ENCODE measurements at regions of chr4 and their contacts with region 1.

Region 1: DNA sequence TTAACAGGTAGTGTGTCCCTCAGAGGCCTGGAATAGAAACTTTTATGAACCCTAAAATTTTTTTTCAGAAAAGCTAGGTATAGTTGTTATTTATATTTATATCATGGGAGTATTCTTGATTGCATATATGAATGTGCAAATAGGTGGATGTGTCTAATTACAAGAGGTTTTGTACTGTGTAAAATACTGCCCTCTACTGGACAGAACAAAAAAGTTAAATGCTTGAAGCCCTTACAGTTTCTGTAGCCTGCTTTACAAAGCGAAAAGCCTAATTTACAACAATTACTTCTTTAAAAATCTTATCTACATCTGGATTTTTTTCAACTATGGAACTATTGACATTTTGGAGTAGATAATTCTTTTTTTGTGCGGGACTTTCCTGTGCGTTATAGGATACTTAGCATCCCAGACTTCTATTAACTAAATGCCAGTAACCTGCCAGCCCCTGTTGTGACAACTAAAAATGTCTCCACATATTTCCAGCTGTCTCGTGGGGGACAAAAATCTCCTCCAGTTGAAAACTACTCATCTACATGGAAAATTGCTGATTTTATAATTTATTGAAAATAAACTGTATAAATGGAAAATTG is 35.1 kb downstream of the ENPEP start:
- DNase-seq: peak; percentile 37

Region 2: DNA sequence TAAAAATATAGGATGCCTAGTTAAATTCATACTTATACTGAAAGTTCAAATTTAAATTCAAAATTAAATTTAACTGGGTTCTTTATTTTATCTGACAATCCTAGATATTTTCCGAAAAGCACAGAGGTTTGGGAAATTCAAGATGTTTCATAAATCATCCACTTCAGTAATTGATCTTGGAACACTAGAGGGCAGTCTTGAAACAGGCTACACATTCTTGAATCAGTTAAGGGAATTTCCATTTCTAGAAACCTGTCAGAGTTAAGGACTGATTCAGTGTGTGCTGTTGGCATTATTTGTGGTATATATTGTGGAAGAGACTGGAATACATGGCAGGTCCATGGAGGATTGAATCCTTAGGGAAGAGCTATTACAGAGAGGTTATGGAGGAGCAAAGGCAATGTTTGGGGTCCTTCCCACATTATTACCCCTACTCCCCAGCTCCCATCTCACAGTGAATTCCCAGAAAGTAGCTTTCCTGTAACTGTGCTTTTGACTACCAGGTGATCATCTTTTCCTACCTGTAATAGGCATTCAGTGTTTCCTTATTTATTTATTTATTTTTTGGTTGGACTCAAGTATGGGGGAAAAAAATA is 505.5 kb before region 1 on chr4:
- CTCF ChIA-PET with region 1: interaction called, 13 read pairs
- POLR2A ChIA-PET with region 1: no interaction called
- DNase-seq: peak; percentile 52

Region 3: DNA sequence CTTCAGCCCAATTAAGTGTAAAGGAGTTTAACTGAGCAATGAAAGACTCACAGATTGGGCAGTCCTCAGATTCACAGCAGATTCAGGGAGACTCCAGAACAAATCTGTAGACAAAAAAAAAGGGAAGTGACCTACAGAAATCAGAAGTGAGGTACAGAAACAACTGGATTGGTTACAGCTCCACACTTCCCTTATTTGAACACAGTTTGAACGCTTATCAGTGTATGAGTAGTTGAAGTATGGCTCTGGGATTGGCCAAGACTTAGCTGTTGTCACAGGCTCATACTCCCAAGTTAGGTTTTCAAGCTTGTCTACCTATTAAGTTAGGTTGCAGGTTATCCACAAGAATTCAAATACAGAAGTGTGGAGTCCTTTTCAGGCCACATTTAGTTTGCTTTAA is 200.3 kb before region 1 on chr4:
- CTCF ChIA-PET with region 1: interaction called, 23 read pairs
- POLR2A ChIA-PET with region 1: interaction called, 3 read pairs
- DNase-seq: no peak

Region 4: DNA sequence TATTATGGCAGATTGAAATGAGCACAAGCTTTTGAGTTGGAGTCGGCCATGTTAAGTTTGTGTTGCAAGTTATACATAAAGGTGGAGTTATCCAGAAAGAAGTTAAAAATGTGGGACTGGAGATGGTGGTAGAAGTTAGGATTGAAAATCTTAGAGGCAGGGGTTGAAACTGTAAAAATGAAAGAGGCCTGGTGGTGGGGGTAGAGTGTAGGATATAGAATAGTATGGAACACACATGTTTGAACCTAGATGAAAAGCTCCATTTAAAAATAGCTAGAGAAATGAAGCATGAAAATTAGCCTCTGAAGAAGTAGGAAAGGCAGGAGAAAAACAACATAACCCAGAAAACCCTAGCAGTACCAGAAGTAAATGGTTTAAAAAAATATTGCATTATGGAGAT is 166.9 kb before region 1 on chr4:
- CTCF ChIA-PET with region 1: interaction called, 67 read pairs
- POLR2A ChIA-PET with region 1: interaction called, 3 read pairs
- DNase-seq: peak; percentile 30

Region 5: DNA sequence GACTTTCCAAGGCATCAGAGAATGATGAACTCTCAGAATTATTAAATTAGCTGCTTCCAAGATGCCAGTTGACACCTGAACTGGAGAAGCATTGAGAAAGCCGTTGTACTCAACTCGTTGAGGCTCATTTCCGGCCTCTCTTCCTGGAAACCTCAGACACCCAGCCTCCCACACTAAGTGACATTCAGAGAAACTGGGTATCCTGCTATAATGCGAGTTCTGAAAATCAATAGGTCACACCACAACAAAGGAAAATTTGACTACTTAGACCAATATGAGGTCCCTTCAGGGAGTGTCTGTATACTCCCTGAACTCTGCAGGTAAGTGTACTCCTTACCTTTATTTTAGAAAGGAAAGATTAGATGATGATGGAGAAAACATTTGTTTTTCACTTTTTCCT is 16.1 kb after region 1 on chr4:
- CTCF ChIA-PET with region 1: no interaction called
- POLR2A ChIA-PET with region 1: no interaction called
- DNase-seq: no peak

Region 6: DNA sequence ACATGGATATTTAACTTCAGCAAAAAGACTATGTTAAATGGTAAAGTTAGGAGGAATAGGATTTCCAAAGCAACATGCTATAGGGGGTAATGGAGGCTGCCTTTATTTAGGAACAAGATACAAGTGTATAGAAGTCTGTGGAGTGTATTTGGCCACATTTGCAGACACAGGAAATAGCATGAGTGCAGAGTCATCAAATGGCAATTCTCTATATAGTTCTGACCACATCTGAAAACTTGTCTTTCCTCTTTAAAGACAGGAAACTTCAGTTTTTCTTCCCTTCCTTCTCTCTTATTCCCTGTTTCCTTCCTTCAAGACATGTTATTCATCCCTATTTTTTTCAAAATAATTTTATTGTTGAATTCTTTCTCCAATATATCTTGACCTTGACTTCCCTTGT is 231.1 kb after region 1 on chr4:
- CTCF ChIA-PET with region 1: no interaction called
- POLR2A ChIA-PET with region 1: no interaction called
- DNase-seq: no peak

Region 7: DNA sequence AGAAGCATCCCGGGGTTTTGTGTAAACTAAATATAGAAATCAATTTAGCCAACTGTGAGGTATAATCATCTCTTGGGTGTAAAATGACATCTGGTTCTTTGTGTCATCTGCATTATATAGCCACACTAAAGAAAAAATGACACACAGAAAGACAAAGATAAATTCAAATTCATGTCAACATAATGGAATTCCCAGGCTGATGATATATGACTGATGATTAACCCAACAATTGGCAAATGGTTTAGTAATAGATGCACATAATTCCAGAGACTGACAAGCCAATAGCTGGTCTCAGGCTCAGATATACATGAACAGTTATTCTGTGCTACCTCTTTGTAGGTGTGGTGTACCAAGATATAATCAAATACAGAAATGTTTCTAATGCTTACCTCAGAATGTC is 487.3 kb after region 1 on chr4:
- CTCF ChIA-PET with region 1: no interaction called
- POLR2A ChIA-PET with region 1: no interaction called
- DNase-seq: no peak

Measured in HEK293T (cell line).